ENCODE measurements at regions of chr17 and their contacts with region 1.

Region 1: DNA sequence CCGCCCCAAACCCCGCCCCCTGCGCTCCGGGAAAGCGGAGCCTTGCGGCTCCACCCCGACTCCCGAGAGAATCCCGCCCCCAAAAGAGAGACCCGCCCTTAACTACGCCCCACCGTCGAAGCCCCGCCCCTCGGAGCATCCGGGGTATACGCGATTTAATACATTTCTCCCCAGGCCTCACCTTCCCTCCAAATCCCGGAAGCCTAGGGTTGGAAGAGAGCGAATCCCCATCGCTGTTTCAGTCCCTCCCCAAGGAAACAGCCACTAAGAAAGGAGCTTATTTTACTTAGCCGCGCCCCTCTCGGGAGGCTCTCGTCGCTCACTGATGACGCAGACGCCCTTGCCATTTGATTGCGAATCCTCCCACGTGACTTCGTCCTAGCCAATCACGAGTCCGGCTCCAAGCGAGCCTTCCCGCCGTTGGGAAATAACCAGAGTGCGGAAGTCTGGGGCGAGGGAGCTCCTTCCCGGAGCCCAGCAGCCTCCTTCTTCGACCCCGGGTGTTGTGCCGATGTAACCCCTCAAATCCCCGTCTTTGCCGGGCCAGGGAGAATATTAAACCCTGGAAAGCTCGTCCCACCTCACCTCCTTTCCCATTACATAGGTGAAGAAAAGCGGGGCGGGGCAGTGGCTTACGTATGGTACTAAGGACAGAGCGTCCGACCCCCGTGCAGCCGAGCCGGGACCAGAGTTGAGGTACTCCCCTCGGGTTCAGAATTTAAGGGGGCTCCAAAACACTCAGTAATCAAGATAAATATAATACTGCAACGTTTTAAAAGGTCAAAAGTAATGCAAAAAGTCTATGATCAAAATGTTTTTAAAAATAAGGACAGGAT is 462 bp upstream of the FDXR start:
- DNase-seq: peak; percentile 100
- ATAC-seq: peak; percentile 87
- H3K4me3 ChIP-seq: peak overlapping the region; percentile 87 to 96
- H3K27ac ChIP-seq: peak overlapping the region; percentile 94
- H3K4me1 ChIP-seq: peaks cover 14 to 45% of the 10 kb centered on the region in 2 experiments
- H3K27me3 ChIP-seq: no peaks in the 10 kb centered on the region
- CTCF ChIP-seq: no peak
- POLR2A ChIP-seq: peak; percentile 93
- RAD21 ChIP-seq: no peak

Region 2: DNA sequence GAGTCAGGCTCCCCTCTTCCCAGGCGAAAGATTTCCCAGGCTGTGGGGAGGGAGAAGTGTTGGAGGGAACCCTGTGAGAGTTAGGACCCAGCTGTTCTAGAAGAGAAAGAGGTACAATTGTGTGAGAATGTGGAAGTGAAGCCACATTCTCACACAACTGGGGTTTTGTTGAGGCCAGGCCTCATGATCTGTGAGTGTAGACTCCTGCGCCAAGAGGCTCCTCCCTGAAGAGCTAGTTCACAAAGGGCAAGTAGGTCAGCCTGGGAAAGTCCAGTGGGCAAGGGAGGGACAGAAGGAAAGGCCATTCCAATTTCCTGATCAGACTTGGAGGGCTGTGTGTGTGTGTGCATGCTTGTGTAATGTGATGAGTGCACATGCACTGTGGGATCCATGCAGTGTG is 175.7 kb before region 1 on chr17:
- CTCF ChIA-PET with region 1: no interaction called
- POLR2A ChIA-PET with region 1: no interaction called
- RAD21 ChIA-PET with region 1: no interaction called
- intact Hi-C with region 1: no loop called
- DNase-seq: no peak
- ATAC-seq: no peak
- H3K4me3 ChIP-seq: no peak overlapping the region
- H3K27ac ChIP-seq: no peak overlapping the region
- H3K4me1 ChIP-seq: no peaks in the 10 kb centered on the region
- H3K27me3 ChIP-seq: peaks cover 13% of the 10 kb centered on the region; the same call in 1 of the 2 replicates
- CTCF ChIP-seq: no peak
- POLR2A ChIP-seq: no peak
- RAD21 ChIP-seq: no peak

Region 3: GRCh38 chr17:74842599-74843351 is 30.5 kb before region 1 on chr17:
- CTCF ChIA-PET with region 1: interaction called, 8 read pairs
- POLR2A ChIA-PET with region 1: interaction called, 18 read pairs
- RAD21 ChIA-PET with region 1: interaction called in 1 of 2 experiments, 3 read pairs
- intact Hi-C with region 1: no loop called
- DNase-seq: peak; percentile 56
- ATAC-seq: peak; percentile 90
- H3K4me3 ChIP-seq: peak overlapping the region; percentile 40 to 59
- H3K27ac ChIP-seq: peak overlapping the region; percentile 80; the same call in 1 of the 2 replicates
- H3K4me1 ChIP-seq: peaks cover 7 to 25% of the 10 kb centered on the region in 2 experiments
- H3K27me3 ChIP-seq: no peaks in the 10 kb centered on the region
- CTCF ChIP-seq: peak in 2 of 3 experiments; percentile 58 to 65; a peak in 5 of 6 replicates
- POLR2A ChIP-seq: peak; percentile 36
- RAD21 ChIP-seq: no peak; the same call in none of the 2 replicates

Region 4: DNA sequence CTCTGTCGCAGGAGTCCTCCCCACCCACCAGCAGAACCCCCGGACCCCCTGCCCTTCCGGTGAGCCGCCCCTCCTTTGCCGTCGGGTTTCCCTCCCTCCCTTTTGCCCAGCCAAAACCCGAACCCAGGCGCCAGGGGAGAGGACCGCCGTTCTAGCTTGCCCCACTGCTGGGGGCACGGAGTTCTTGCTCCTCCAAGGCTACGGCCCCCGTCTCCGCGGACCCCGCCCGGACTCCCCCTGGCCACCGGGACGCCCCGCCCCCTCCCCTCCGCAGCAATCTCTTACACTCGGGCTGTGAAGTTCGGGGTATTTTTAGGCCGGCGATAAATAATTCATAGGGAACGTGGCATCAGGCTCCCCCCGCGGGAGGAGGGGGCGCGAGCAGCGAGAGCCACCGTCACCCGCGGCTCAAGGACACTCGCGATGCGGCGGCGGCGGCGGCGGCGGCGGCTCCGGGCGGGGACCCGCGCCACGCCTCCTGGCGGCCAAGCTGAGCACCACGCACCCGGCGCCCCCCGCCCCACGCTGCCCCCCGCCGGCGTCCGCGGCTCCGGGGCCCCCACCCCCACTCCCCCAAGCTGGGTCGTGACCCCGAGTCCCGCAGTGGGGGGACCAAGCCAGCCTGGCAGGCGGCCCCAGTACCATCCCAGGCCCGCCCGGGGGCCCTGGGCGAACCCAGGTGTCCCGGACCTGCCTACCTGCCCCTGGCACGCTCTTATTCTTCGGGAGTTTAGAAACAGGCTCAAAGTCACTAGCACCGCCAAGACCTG is 13.6 kb before region 1 on chr17 and contains the start of gene GRIN2C:
- CTCF ChIA-PET with region 1: interaction called, 40 read pairs
- POLR2A ChIA-PET with region 1: interaction called, 23 read pairs
- RAD21 ChIA-PET with region 1: no interaction called
- intact Hi-C with region 1: no loop called
- DNase-seq: no peak
- ATAC-seq: peak; percentile 47
- H3K4me3 ChIP-seq: no peak within 1 kb of the TSS; a peak in 1 of 4 replicates
- H3K27ac ChIP-seq: no peak within 1 kb of the TSS
- H3K4me1 ChIP-seq: peaks cover 0 to 13% of the 10 kb centered on the region in 2 experiments; a peak in 1 of 4 replicates
- H3K27me3 ChIP-seq: no peaks in the 10 kb centered on the region; the same call in 1 of the 2 replicates
- CTCF ChIP-seq: peak in 1 of 3 experiments; percentile 35; a peak in 2 of 6 replicates
- POLR2A ChIP-seq: no peak
- RAD21 ChIP-seq: no peak
- total RNA-seq, gene GRIN2C: 2.2 TPM

Region 5: DNA sequence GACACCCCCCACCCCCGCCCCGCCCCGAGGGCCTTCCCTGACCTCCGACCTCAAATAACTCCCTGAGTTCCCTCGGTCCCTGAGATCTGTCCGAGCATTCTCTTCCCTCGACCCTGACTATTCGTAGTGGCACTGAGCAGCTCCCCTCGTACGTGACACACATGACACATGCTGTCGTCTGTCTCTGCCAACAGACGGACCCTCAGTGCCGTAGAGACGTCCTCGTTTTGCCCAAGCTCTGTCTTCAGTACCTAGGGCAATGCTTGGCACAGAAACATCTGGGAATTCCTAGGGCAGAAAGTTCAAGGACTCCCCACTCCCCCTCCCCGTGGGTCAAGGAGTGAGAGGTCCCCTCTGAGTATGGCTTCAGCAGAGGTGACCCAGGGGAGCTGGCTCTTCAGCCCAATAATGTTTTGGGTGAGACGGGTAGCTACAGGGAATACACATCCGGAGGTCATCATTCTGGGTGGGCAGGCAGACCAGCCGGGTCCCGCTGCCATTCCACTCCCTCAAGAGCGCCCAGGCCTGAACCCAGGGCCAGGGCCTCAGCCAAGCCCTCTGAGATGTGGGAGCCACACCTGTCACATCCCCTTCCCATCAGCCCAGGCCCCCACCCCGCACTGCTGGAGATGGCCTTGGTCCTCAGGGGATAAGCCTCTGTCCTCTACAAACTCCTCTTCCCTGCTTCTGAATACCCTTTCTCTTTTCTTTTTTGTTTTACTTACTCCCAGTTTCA is 20.8 kb after region 1 on chr17:
- CTCF ChIA-PET with region 1: interaction called, 3 read pairs
- POLR2A ChIA-PET with region 1: interaction called, 10 read pairs
- RAD21 ChIA-PET with region 1: no interaction called
- intact Hi-C with region 1: no loop called
- DNase-seq: no peak
- ATAC-seq: no peak
- H3K4me3 ChIP-seq: no peak overlapping the region
- H3K27ac ChIP-seq: no peak overlapping the region
- H3K4me1 ChIP-seq: no peaks in the 10 kb centered on the region
- H3K27me3 ChIP-seq: peaks cover 6% of the 10 kb centered on the region; the same call in 1 of the 2 replicates
- CTCF ChIP-seq: no peak
- POLR2A ChIP-seq: no peak
- RAD21 ChIP-seq: no peak

Region 6: GRCh38 chr17:75034236-75034908 is 161.1 kb after region 1 on chr17:
- CTCF ChIA-PET with region 1: no interaction called
- POLR2A ChIA-PET with region 1: interaction called, 6 read pairs
- RAD21 ChIA-PET with region 1: no interaction called
- intact Hi-C with region 1: loop called (anchors 5 kb)
- DNase-seq: peak; percentile 93
- ATAC-seq: peak; percentile 62
- H3K4me3 ChIP-seq: peak overlapping the region; percentile 46 to 57
- H3K27ac ChIP-seq: peak overlapping the region; percentile 87
- H3K4me1 ChIP-seq: peaks cover 45 to 58% of the 10 kb centered on the region in 2 experiments
- H3K27me3 ChIP-seq: no peaks in the 10 kb centered on the region
- CTCF ChIP-seq: peak in 2 of 3 experiments; percentile 7 to 37; a peak in 1 of 6 replicates
- POLR2A ChIP-seq: no peak
- RAD21 ChIP-seq: no peak

Region 7: DNA sequence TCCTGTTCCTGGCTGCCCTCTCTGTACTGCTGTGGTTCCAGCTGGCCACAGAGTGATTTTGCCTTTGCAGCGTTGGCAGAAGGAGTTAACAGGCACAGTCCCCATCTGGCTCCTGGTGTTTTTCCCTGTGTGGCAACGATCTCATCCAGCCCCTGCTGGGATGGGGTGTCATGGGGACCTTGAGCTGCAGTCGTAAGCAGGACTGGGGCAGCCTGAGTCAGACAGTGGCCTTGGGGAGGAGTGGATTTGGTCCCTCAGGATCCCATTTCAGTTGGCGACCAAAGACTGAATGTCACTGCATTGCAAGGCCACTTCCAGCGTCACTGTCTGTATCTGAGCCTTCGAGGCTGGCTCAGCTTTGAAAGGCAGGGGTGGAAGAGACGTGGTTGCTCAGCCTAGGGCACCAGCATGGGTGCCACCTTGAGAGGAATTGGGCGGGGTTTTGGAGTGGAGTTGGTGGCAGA is 595.1 kb after region 1 on chr17:
- CTCF ChIA-PET with region 1: no interaction called
- POLR2A ChIA-PET with region 1: no interaction called
- RAD21 ChIA-PET with region 1: no interaction called
- intact Hi-C with region 1: no loop called
- DNase-seq: no peak
- ATAC-seq: no peak
- H3K4me3 ChIP-seq: no peak overlapping the region
- H3K27ac ChIP-seq: no peak overlapping the region
- H3K4me1 ChIP-seq: no peaks in the 10 kb centered on the region
- H3K27me3 ChIP-seq: no peaks in the 10 kb centered on the region
- CTCF ChIP-seq: no peak
- POLR2A ChIP-seq: no peak
- RAD21 ChIP-seq: no peak

Measured in HCT116 (cell line).